A549 (cell line): ENCODE measurements at regions of chr15 and their contacts with region 1.

Region 1: GRCh38 chr15:32736005-32736700 is 18.3 kb downstream of the GREM1 start:
- DNase-seq: no peak
- ATAC-seq: no peak
- H3K4me3 ChIP-seq: no peak overlapping the region
- H3K27ac ChIP-seq: no peak overlapping the region
- H3K4me1 ChIP-seq: no peaks in the 10 kb centered on the region
- CTCF ChIP-seq: no peak
- EP300 ChIP-seq: no peak
- POLR2A ChIP-seq: no peak
- RAD21 ChIP-seq: no peak

Region 2: GRCh38 chr15:32723171-32723948 is 12.8 kb before region 1 on chr15:
- CTCF ChIA-PET with region 1: interaction called, 10 read pairs
- POLR2A ChIA-PET with region 1: no interaction called
- DNase-seq: no peak
- ATAC-seq: no peak
- H3K4me3 ChIP-seq: no peak overlapping the region
- H3K27ac ChIP-seq: no peak overlapping the region
- H3K4me1 ChIP-seq: 0 out of 3 replicates have a peak, but pooled peaks cover 6% of the 10 kb centered on the region
- CTCF ChIP-seq: no peak
- EP300 ChIP-seq: no peak
- POLR2A ChIP-seq: no peak
- RAD21 ChIP-seq: no peak